ENCODE measurements at regions of chr3 and their contacts with region 1.

Region 1: GRCh38 chr3:44729384-44729910 is at the start of gene ZNF501:
- DNase-seq: peak; percentile 94 to 97 (median 95)
- ATAC-seq: peak; percentile 95 to 100 (median 100)
- H3K4me3 ChIP-seq: peak within 1 kb of the TSS; percentile 46 to 94 (median 78)
- H3K27ac ChIP-seq: peak within 1 kb of the TSS in 10 of 12 donors; percentile 18 to 75 (median 57)
- H3K4me1 ChIP-seq: peaks cover 0 to 12% (median 3%) of the 10 kb centered on the region in 12 donors
- H3K27me3 ChIP-seq: no peaks in the 10 kb centered on the region
- CTCF ChIP-seq: peak in 1 of 12 donors; percentile 25
- POLR2A ChIP-seq: peak in 1 of 2 donors; percentile 53
- total RNA-seq, gene ZNF501: 1.8 to 5.5 (median 3.9) TPM

Region 2: GRCh38 chr3:44648564-44649229 is 80.8 kb before region 1 on chr3 and contains the start of gene ZNF35:
- intact Hi-C with region 1: no loop called
- DNase-seq: peak; percentile 75 to 88 (median 85)
- ATAC-seq: peak; percentile 91 to 98 (median 98)
- H3K4me3 ChIP-seq: peak within 1 kb of the TSS; percentile 75 to 99 (median 88)
- H3K27ac ChIP-seq: peak within 1 kb of the TSS in 11 of 12 donors; percentile 56 to 81 (median 76)
- H3K4me1 ChIP-seq: peaks cover 0 to 15% (median 10%) of the 10 kb centered on the region in 12 donors
- H3K27me3 ChIP-seq: no peaks in the 10 kb centered on the region
- CTCF ChIP-seq: no peak
- POLR2A ChIP-seq: peak in 1 of 2 donors; percentile 24
- total RNA-seq, gene ZNF35: 6.0 to 14.6 (median 6.5) TPM

Region 3: GRCh38 chr3:44861412-44862220 is 132.2 kb after region 1 on chr3 and contains the start of gene TMEM42:
- intact Hi-C with region 1: loop called in 1 of 10 experiments (anchors 1 kb)
- DNase-seq: peak; percentile 90 to 96 (median 94)
- ATAC-seq: peak; percentile 96 to 99 (median 99)
- H3K4me3 ChIP-seq: peak within 1 kb of the TSS; percentile 20 to 84 (median 70)
- H3K27ac ChIP-seq: peak within 1 kb of the TSS; percentile 57 to 96 (median 89)
- H3K4me1 ChIP-seq: peaks cover 0 to 20% (median 8%) of the 10 kb centered on the region in 12 donors
- H3K27me3 ChIP-seq: no peaks in the 10 kb centered on the region
- CTCF ChIP-seq: peak; percentile 5 to 51 (median 28)
- POLR2A ChIP-seq: peak in 1 of 2 donors; percentile 81
- total RNA-seq, gene TMEM42: 7.3 to 13.0 (median 10.6) TPM

Measured in heart left ventricle (tissue), 16 donors.